T-cell (primary cell): ENCODE measurements at regions of chr4 and their contacts with region 1.

Region 1: DNA sequence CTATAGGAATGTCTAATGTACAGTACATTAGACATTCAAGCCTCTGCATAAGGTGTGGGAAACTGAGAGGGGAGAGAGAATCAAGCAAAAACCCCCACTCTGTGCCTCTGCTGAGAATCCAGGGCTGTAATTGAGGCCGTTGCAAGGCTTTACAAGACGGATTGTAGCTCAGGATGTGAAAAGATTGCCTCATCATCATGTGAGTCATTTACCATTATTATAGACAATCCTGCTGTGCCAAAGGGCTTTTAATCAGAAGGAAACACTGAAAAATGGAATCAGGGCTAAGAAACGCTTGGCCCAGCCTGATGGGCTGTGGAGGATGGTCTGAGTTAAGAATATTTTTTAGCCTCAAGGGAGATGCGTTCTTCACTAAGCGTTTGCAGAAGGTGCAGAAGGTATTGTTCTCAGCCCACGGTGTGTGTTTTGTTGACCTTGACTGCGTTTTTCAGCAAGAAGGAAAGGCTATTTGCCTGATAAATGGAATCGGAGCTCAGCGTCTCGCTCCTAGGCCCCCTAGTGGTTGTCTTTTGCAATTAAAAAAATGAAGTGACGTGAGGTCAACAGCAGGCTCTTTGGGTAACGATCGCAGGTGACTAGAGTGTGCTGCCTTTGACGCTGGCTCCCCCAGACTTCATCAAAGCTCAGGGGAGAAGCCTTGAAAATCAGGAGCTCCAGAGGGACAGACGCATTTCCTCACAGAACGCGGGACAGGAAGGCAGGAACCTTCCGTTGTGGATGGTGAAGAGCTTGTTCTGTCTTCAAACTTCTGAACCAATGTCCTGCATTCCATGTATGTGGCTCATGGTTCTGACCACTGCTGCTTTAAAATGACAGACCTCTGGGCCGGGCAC is 18.1 kb upstream of the CHRNA9 start:
- DNase-seq: peak; percentile 26 to 85 (median 51)
- ATAC-seq: peak; percentile 64 to 77 (median 77)
- H3K4me3 ChIP-seq: peak overlapping the region; percentile 38 to 62
- H3K4me3 Mint-ChIP-seq: peak overlapping the region; percentile 75 to 83 (median 76)
- H3K27ac ChIP-seq: peak overlapping the region; percentile 85
- H3K27ac Mint-ChIP-seq: peak overlapping the region; percentile 95 to 98
- H3K4me1 ChIP-seq: peaks cover 20 to 28% of the 10 kb centered on the region in 2 experiments
- H3K4me1 Mint-ChIP-seq: peaks cover 44 to 61% (median 60%) of the 10 kb centered on the region in 3 donors
- H3K27me3 ChIP-seq: no peaks in the 10 kb centered on the region
- H3K27me3 Mint-ChIP-seq: no peaks in the 10 kb centered on the region

Region 2: GRCh38 chr4:40056716-40057585 is 260.1 kb before region 1 on chr4 and contains the start of gene N4BP2:
- CTCF ChIA-PET with region 1: interaction called, 3 to 8 read pairs
- POLR2A ChIA-PET with region 1: interaction called, 4 to 10 read pairs
- DNase-seq: peak; percentile 41 to 86 (median 64)
- ATAC-seq: peak; percentile 69 to 79 (median 76)
- H3K4me3 ChIP-seq: peak within 1 kb of the TSS; percentile 75 to 97
- H3K4me3 Mint-ChIP-seq: peak within 1 kb of the TSS; percentile 94 to 98 (median 95)
- H3K27ac ChIP-seq: peak within 1 kb of the TSS; percentile 87
- H3K27ac Mint-ChIP-seq: peak within 1 kb of the TSS; percentile 96
- H3K4me1 ChIP-seq: peaks cover 17 to 21% of the 10 kb centered on the region in 2 experiments
- H3K4me1 Mint-ChIP-seq: peaks cover 31 to 44% (median 37%) of the 10 kb centered on the region in 3 donors
- H3K27me3 ChIP-seq: no peaks in the 10 kb centered on the region
- H3K27me3 Mint-ChIP-seq: no peaks in the 10 kb centered on the region
- total RNA-seq, gene N4BP2: 12.6 to 38.3 (median 15.3) TPM

Region 3: GRCh38 chr4:40193016-40193571 is 123.9 kb before region 1 on chr4:
- CTCF ChIA-PET with region 1: interaction called in 1 of 2 experiments, 15 read pairs
- POLR2A ChIA-PET with region 1: interaction called, 12 read pairs
- DNase-seq: peak in 28 of 35 experiments; percentile 13 to 73 (median 45)
- ATAC-seq: peak; percentile 11 to 48 (median 46)
- H3K4me3 ChIP-seq: peak overlapping the region; percentile 33 to 43
- H3K4me3 Mint-ChIP-seq: peak overlapping the region; percentile 75 to 98 (median 96)
- H3K27ac ChIP-seq: peak overlapping the region; percentile 99
- H3K27ac Mint-ChIP-seq: peak overlapping the region; percentile 95 to 96
- H3K4me1 ChIP-seq: peaks cover 44 to 60% of the 10 kb centered on the region in 2 experiments
- H3K4me1 Mint-ChIP-seq: peaks cover 73 to 82% (median 75%) of the 10 kb centered on the region in 3 donors
- H3K27me3 ChIP-seq: no peaks in the 10 kb centered on the region
- H3K27me3 Mint-ChIP-seq: no peaks in the 10 kb centered on the region

Region 4: GRCh38 chr4:40228497-40229365 is 88.3 kb before region 1 on chr4:
- CTCF ChIA-PET with region 1: interaction called, 7 to 10 read pairs
- POLR2A ChIA-PET with region 1: no interaction called
- DNase-seq: peak in 1 of 35 experiments; percentile 52
- ATAC-seq: no peak
- H3K4me3 ChIP-seq: peak overlapping the region; percentile 15 to 19
- H3K4me3 Mint-ChIP-seq: peak overlapping the region; percentile 68 to 83 (median 76)
- H3K27ac ChIP-seq: peak overlapping the region; percentile 87
- H3K27ac Mint-ChIP-seq: peak overlapping the region; percentile 97 to 99
- H3K4me1 ChIP-seq: peaks cover 76 to 90% of the 10 kb centered on the region in 2 experiments
- H3K4me1 Mint-ChIP-seq: peaks cover 91 to 94% (median 91%) of the 10 kb centered on the region in 3 donors
- H3K27me3 ChIP-seq: no peaks in the 10 kb centered on the region
- H3K27me3 Mint-ChIP-seq: no peaks in the 10 kb centered on the region

Region 5: DNA sequence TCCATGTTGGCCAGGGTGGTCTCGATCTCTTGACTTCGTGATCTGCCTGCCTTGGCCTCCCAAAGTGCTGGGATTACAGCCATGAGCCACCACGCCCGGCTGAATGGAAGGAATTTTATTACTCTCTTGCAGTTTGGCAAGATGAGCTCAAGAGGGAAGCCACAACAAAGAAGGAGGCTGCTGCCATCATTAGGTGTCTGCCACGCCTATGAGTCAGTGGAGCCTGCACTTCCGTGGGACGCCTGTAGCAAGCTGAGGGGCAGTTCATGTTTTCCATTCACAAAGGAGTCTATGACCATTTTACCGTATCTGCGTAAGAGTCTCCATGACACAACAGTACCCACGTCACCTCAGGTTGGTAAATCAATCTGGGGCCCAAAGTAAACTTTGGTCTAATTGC is 33.0 kb before region 1 on chr4:
- CTCF ChIA-PET with region 1: interaction called, 4 to 22 read pairs
- POLR2A ChIA-PET with region 1: no interaction called
- DNase-seq: peak in 34 of 35 experiments; percentile 62 to 89 (median 74)
- ATAC-seq: peak; percentile 97 to 99 (median 98)
- H3K4me3 ChIP-seq: peak overlapping the region in 1 of 2 donors; percentile 5
- H3K4me3 Mint-ChIP-seq: peak overlapping the region in 2 of 3 donors; percentile 43 to 78
- H3K27ac ChIP-seq: peak overlapping the region; percentile 90
- H3K27ac Mint-ChIP-seq: peak overlapping the region; percentile 89 to 94
- H3K4me1 ChIP-seq: peaks cover 20 to 58% of the 10 kb centered on the region in 2 experiments
- H3K4me1 Mint-ChIP-seq: peaks cover 57 to 73% (median 70%) of the 10 kb centered on the region in 3 donors
- H3K27me3 ChIP-seq: no peaks in the 10 kb centered on the region
- H3K27me3 Mint-ChIP-seq: no peaks in the 10 kb centered on the region